H1 (cell line): ENCODE measurements at regions of chr5 and their contacts with region 1.

Region 1: GRCh38 chr5:149765932-149766331 is 35.8 kb downstream of the PPARGC1B start:
- DNase-seq: no peak
- H3K4me3 ChIP-seq: no peak overlapping the region
- H3K27ac ChIP-seq: no peak overlapping the region
- H3K4me1 ChIP-seq: peaks cover 0 to 2% (median 0%) of the 10 kb centered on the region in 4 experiments; a peak in 1 of 7 replicates
- H3K27me3 ChIP-seq: no peaks in the 10 kb centered on the region
- CTCF ChIP-seq: peak in 2 of 3 experiments; percentile 28 to 47; a peak in 2 of 4 replicates
- EP300 ChIP-seq: no peak
- POLR2A ChIP-seq: no peak
- RAD21 ChIP-seq: peak; percentile 21 to 32; a peak in 3 of 4 replicates

Region 2: GRCh38 chr5:149392718-149393117 is 373.2 kb before region 1 on chr5:
- CTCF ChIA-PET with region 1: no interaction called
- POLR2A ChIA-PET with region 1: no interaction called
- DNase-seq: no peak
- H3K4me3 ChIP-seq: no peak overlapping the region
- H3K27ac ChIP-seq: no peak overlapping the region
- H3K4me1 ChIP-seq: no peaks in the 10 kb centered on the region
- H3K27me3 ChIP-seq: no peaks in the 10 kb centered on the region; a peak in 1 of 7 replicates
- CTCF ChIP-seq: no peak
- EP300 ChIP-seq: no peak
- POLR2A ChIP-seq: no peak
- RAD21 ChIP-seq: no peak

Region 3: DNA sequence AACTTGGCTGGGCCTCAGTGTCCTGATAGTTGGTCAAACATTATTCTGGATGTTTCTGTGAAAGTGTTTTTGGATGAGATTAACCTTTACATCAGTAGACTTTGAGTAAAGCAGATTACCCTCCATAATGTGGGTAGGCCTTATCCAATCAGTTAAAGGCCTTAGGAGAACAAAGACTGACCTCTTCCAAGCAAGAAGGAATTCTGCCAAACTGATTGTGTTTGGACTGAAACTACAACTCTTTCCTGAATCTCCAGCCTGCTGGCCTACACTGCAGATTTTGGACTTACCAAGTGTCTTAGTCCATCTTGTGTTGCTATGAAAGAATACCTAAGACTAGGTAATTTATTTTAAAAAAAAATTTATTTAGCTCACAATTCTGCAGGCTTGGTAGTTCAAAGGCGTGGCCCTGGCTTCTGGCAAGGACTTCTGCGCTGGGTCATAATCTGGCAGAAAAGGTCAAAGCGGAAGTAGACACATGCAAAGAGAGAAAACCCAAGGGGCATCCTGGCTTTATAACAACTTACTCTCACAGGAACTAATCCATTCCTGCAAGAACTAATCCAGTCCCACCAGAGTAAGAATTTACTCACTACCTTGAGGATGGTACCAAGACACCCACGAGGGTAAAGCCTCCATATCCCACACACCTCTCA is 193.2 kb before region 1 on chr5:
- CTCF ChIA-PET with region 1: no interaction called
- POLR2A ChIA-PET with region 1: no interaction called
- DNase-seq: no peak
- H3K4me3 ChIP-seq: no peak overlapping the region
- H3K27ac ChIP-seq: no peak overlapping the region
- H3K4me1 ChIP-seq: no peaks in the 10 kb centered on the region
- H3K27me3 ChIP-seq: no peaks in the 10 kb centered on the region
- CTCF ChIP-seq: no peak
- EP300 ChIP-seq: no peak
- POLR2A ChIP-seq: no peak
- RAD21 ChIP-seq: no peak

Region 4: GRCh38 chr5:149731639-149732323 is 34.2 kb before region 1 on chr5:
- CTCF ChIA-PET with region 1: interaction called, 11 read pairs
- POLR2A ChIA-PET with region 1: interaction called, 3 read pairs
- DNase-seq: peak; percentile 53 to 68
- H3K4me3 ChIP-seq: peak overlapping the region; percentile 60 to 93 (median 64)
- H3K27ac ChIP-seq: no peak overlapping the region
- H3K4me1 ChIP-seq: peaks cover 2 to 11% (median 4%) of the 10 kb centered on the region in 4 experiments; a peak in 5 of 7 replicates
- H3K27me3 ChIP-seq: peaks cover 0 to 21% (median 12%) of the 10 kb centered on the region in 4 experiments; a peak in 5 of 7 replicates
- CTCF ChIP-seq: no peak
- EP300 ChIP-seq: no peak
- POLR2A ChIP-seq: no peak
- RAD21 ChIP-seq: no peak

Region 5: DNA sequence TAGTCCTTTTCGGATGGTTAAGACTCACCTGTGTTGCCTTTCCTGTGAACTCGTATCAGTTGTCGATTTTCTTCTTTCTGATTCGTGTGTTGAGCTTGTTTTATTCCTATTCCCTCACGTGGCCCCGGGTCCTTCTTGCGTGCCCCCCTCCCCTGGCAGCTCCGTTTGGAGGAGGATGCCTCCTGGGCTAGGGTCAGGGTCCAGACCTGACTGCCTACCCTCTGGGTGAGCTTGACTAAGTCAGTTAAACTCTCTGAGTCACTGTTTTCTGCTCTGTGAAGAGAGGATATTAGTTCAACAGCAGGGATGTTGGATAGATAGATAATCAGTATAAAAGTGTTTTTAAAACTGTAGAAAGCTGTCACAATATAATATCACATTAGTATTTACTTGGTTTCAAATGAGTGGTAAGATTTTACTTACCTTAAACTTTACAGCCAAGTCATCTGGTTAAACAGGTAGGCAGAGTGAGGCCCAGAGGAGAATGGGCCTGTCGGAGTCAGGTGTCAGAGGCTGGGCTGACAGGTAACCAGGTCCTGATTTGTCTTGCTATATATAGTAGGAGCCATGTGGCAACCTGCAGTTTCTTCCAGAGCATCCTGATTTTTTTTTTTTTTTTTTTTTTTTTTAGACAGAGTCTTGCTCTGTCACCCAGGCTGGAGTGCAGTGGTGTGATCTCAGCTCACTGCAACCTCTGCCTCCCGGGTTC is 11.6 kb before region 1 on chr5:
- CTCF ChIA-PET with region 1: interaction called, 26 read pairs
- POLR2A ChIA-PET with region 1: interaction called, 3 read pairs
- DNase-seq: no peak
- H3K4me3 ChIP-seq: no peak overlapping the region
- H3K27ac ChIP-seq: no peak overlapping the region
- H3K4me1 ChIP-seq: peaks cover 0 to 6% (median 0%) of the 10 kb centered on the region in 4 experiments; a peak in 2 of 7 replicates
- H3K27me3 ChIP-seq: no peaks in the 10 kb centered on the region
- CTCF ChIP-seq: no peak
- EP300 ChIP-seq: no peak
- POLR2A ChIP-seq: no peak
- RAD21 ChIP-seq: no peak

Region 6: GRCh38 chr5:149790276-149790675 is 24.3 kb after region 1 on chr5:
- CTCF ChIA-PET with region 1: interaction called, 11 read pairs
- POLR2A ChIA-PET with region 1: no interaction called
- DNase-seq: no peak
- H3K4me3 ChIP-seq: no peak overlapping the region
- H3K27ac ChIP-seq: no peak overlapping the region
- H3K4me1 ChIP-seq: no peaks in the 10 kb centered on the region
- H3K27me3 ChIP-seq: no peaks in the 10 kb centered on the region
- CTCF ChIP-seq: no peak
- EP300 ChIP-seq: no peak
- POLR2A ChIP-seq: no peak
- RAD21 ChIP-seq: no peak